Heart right ventricle (tissue), 16 donors: ENCODE measurements at regions of chr20 and their contacts with region 1.

Region 1: DNA sequence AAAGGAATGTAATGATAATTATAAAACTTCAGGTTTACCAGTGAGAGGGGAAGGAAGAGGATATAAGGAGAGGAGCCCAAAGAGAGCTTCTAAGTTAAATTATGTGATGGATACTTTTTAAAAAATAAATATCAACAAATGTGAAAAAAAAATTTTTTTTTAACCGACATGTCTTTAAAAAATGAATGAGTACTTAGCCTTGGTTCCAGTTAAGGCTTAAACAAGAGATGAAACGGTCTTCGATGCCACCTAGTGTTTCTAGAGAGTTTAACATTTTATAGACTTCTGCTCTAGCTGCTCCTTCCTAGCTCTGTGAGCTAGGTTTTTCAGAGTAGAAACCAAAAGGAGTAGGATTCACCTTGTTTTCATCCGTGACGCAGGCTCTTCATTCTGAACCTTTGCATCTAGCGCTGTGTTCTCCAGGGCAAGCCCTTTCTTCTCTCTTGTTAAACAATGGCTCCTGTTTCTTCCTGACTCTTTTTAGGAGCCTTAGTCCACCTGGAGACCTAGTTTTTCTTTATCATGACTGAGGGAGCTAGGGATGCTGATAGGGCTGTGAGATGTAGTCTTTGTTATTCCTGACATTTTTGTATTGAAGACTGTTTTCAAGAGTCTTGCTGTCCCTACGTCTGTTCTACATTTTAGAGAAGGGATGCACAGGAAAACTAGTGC is 42.4 kb upstream of the GNRH2 start:
- DNase-seq: peak in 1 of 2 donors; percentile 10
- ATAC-seq: peak in 2 of 8 donors; percentile 61
- H3K4me3 ChIP-seq: no peak overlapping the region
- H3K27ac ChIP-seq: no peak overlapping the region
- H3K4me1 ChIP-seq: no peaks in the 10 kb centered on the region
- H3K27me3 ChIP-seq: no peaks in the 10 kb centered on the region
- CTCF ChIP-seq: peak in 8 of 9 donors; percentile 34 to 70 (median 49)

Region 2: GRCh38 chr20:2599288-2600006 is 401.5 kb before region 1 on chr20:
- intact Hi-C with region 1: no loop called
- DNase-seq: no peak
- ATAC-seq: no peak
- H3K4me3 ChIP-seq: no peak overlapping the region
- H3K27ac ChIP-seq: no peak overlapping the region
- H3K4me1 ChIP-seq: no peaks in the 10 kb centered on the region
- H3K27me3 ChIP-seq: peaks cover 0 to 21% (median 9%) of the 10 kb centered on the region in 7 donors
- CTCF ChIP-seq: no peak

Region 3: GRCh38 chr20:2873010-2873746 is 127.8 kb before region 1 on chr20 and contains the start of gene PTPRA:
- intact Hi-C with region 1: loop called in 2 of 10 experiments (anchors 10 kb)
- DNase-seq: peak; percentile 93 to 94
- ATAC-seq: peak; percentile 96 to 99 (median 97)
- H3K4me3 ChIP-seq: peak within 1 kb of the TSS; percentile 65 to 100 (median 91)
- H3K27ac ChIP-seq: peak within 1 kb of the TSS; percentile 68 to 93 (median 83)
- H3K4me1 ChIP-seq: peaks cover 2 to 64% (median 40%) of the 10 kb centered on the region in 9 donors
- H3K27me3 ChIP-seq: no peaks in the 10 kb centered on the region
- CTCF ChIP-seq: no peak
- total RNA-seq, gene PTPRA: 22.1 to 37.3 (median 30.1) TPM

Region 4: DNA sequence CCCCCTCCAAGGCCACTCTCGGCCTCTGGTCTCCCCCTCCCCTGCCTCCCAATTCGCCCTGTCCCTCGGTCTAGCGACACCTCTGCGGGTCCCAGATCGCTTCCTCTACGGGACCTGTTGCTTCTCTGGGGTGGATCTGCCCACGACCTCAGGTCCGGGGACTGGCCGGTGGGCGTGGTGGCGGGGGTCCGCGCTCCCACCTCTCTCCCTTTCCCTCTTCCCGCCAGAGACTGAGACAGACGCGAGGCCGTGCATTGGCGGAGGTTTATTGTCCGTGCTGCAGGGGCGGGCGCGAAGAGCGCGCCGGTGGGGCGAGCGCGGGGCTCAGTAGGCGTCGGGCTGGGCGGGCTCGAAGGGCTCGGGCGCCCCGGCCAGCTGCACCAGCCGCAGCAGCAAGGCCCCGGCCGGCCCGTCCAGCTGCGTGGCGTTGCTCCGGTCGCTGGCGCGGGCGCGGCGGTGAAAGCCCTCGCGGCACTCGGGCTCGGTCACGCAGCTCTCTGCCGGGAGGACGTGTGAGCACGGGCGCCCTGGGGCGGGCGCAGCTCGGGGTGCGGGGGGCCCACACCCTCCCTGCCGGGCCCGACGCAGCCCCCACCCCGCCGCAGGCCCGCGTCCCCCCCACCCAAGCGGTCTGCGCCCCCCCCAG is 81.4 kb after region 1 on chr20:
- intact Hi-C with region 1: no loop called
- DNase-seq: no peak
- ATAC-seq: peak in 1 of 8 donors; percentile 53
- H3K4me3 ChIP-seq: peak overlapping the region in 8 of 10 donors; percentile 3 to 43 (median 31)
- H3K27ac ChIP-seq: no peak overlapping the region
- H3K4me1 ChIP-seq: peaks cover 0 to 26% (median 8%) of the 10 kb centered on the region in 9 donors
- H3K27me3 ChIP-seq: peaks cover 0 to 68% (median 30%) of the 10 kb centered on the region in 7 donors
- CTCF ChIP-seq: no peak

Region 5: DNA sequence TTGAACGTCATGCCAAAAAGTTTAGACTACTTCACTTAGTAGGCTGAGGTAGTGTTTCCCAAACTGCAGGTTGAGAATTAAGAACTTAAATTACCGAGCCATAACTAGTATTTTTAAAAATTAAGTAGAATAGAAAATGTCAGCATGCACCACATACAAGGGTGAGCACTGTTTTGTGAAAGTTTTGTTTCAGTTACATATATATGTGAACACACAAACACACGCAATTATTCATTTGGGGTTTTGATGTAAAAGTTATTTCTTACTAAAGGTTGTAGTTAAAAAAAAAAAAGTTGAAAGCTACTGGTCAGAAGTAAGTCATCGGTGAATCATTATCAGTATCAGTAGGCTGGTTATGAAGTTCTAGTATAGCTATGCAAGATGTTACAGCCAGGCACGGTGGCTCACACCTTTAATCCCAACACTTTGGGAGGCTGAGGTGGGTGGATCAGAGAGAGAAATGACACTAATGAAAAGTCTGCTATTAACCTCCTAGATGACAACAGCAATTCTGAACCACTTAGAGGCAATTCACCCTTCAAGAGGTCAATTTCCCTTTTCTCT is 134.6 kb after region 1 on chr20:
- intact Hi-C with region 1: no loop called
- DNase-seq: no peak
- ATAC-seq: no peak
- H3K4me3 ChIP-seq: no peak overlapping the region
- H3K27ac ChIP-seq: no peak overlapping the region
- H3K4me1 ChIP-seq: no peaks in the 10 kb centered on the region
- H3K27me3 ChIP-seq: no peaks in the 10 kb centered on the region
- CTCF ChIP-seq: no peak

Region 6: DNA sequence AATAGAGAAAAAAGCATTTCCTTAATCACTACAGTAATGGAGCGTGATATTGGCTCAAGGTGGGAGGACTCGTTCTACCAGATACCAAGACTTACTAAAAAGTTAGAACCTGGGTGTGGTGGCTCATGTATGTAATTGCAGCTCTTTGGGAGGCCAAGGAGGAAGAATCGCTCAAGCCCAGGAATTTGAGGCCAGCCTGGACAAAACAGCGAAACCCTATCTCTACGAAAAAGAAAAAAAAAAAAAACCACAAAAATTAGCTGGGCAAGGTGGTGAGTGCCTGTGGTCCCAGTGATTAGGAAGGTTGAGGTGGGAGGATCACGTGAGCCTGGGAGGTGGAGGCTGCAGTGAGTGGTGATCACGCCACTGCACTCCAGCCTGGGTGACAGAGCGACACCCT is 445.8 kb after region 1 on chr20:
- intact Hi-C with region 1: no loop called
- DNase-seq: no peak
- ATAC-seq: no peak
- H3K4me3 ChIP-seq: no peak overlapping the region
- H3K27ac ChIP-seq: no peak overlapping the region
- H3K4me1 ChIP-seq: no peaks in the 10 kb centered on the region
- H3K27me3 ChIP-seq: peaks cover 0 to 2% (median 0%) of the 10 kb centered on the region in 7 donors
- CTCF ChIP-seq: no peak